ENCODE measurements at regions of chr2 and their contacts with region 1.

Region 1: GRCh38 chr2:34646901-34647300 is 1047.8 kb upstream of the FAM98A start:
- DNase-seq: no peak
- ATAC-seq: no peak
- H3K4me3 ChIP-seq: no peak overlapping the region
- H3K27ac ChIP-seq: no peak overlapping the region
- H3K4me1 ChIP-seq: no peaks in the 10 kb centered on the region
- H3K27me3 ChIP-seq: no peaks in the 10 kb centered on the region
- CTCF ChIP-seq: no peak
- EP300 ChIP-seq: no peak
- POLR2A ChIP-seq: no peak
- RAD21 ChIP-seq: no peak

Region 2: DNA sequence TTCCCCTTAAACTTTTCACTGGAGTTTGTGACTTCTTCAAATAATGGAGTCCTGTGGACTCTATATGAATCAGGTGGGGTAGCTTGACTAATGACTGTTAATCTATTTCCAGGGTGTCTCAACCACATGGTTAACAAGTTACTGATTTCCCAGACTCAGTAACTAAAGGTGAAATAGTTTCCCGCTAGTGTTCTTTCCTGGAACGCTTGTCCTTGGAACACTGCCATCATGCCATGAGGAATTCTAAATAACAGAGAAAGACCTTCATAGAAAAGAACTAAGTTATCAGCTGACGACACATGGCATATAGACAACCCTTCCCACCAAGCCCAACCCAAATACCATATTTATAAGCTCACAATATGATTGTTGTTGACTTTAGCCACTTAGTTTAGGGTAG is 19.9 kb before region 1 on chr2:
- CTCF ChIA-PET with region 1: no interaction called
- POLR2A ChIA-PET with region 1: no interaction called
- in situ Hi-C with region 1: no loop called
- intact Hi-C with region 1: loop called (anchors 1 kb)
- DNase-seq: no peak
- ATAC-seq: no peak
- H3K4me3 ChIP-seq: no peak overlapping the region
- H3K27ac ChIP-seq: no peak overlapping the region
- H3K4me1 ChIP-seq: no peaks in the 10 kb centered on the region
- H3K27me3 ChIP-seq: no peaks in the 10 kb centered on the region
- CTCF ChIP-seq: no peak
- EP300 ChIP-seq: no peak
- POLR2A ChIP-seq: no peak
- RAD21 ChIP-seq: no peak

Measured in HepG2 (cell line).